GM12878 (cell line): ENCODE measurements at regions of chr1 and their contacts with region 1.

Region 1: GRCh38 chr1:159891275-159892157 is 8.4 kb downstream of the CFAP45 start:
- DNase-seq: peak; percentile 83
- ATAC-seq: peak; percentile 89
- H3K4me3 ChIP-seq: no peak overlapping the region
- H3K27ac ChIP-seq: no peak overlapping the region
- H3K4me1 ChIP-seq: peaks cover 19% of the 10 kb centered on the region
- H3K27me3 ChIP-seq: 0 out of 4 replicates have a peak, but pooled peaks cover 0 to 2% of the 10 kb centered on the region in 2 experiments
- CTCF ChIP-seq: peak; percentile 97 to 100 (median 99); a peak in 5 of 6 replicates
- EP300 ChIP-seq: no peak
- POLR2A ChIP-seq: no peak
- RAD21 ChIP-seq: peak; percentile 99

Region 2: DNA sequence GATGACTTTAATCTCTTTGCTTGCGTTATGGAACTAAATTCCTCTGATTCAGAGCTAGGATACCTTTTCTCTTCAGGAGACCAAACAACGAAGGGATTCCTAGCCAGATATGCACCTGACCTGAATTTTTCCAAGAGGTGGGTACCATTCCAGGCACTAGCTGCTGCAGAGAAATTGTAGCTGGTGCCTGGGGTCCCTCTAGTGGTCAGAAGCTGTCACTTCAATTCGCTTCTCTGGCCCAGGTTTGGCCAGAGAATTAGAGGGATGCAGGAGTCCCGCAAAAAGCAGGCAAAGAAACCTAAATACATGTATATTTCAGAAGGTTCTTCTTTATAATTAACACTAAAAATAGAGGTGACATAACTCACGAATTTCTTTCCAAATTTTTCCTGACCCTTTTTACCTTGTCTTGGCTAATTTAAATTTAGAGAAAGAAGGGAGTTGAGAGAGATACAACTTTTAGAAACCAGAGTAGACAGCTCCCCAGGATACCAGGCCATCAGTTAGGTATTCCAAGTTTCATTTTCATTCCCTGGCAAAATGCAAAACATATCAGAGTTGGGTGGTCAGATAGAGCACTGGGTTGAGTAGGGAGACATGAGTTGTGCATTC is 677.3 kb before region 1 on chr1:
- CTCF ChIA-PET with region 1: interaction called, 13 read pairs
- POLR2A ChIA-PET with region 1: no interaction called
- RAD21 ChIA-PET with region 1: interaction called, 9 read pairs
- SMC1A ChIA-PET with region 1: interaction called, 24 read pairs
- in situ Hi-C with region 1: no loop called
- intact Hi-C with region 1: loop called (anchors 2 kb)
- DNase-seq: no peak
- ATAC-seq: peak; percentile 81
- H3K4me3 ChIP-seq: no peak overlapping the region
- H3K27ac ChIP-seq: no peak overlapping the region
- H3K4me1 ChIP-seq: no peaks in the 10 kb centered on the region; the same call in 1 of the 2 replicates
- H3K27me3 ChIP-seq: peaks cover 1 to 6% of the 10 kb centered on the region in 2 experiments
- CTCF ChIP-seq: peak; percentile 86 to 88 (median 88)
- EP300 ChIP-seq: no peak
- POLR2A ChIP-seq: no peak
- RAD21 ChIP-seq: peak; percentile 78

Region 3: GRCh38 chr1:159266832-159267231 is 624.7 kb before region 1 on chr1:
- CTCF ChIA-PET with region 1: no interaction called
- POLR2A ChIA-PET with region 1: no interaction called
- RAD21 ChIA-PET with region 1: no interaction called
- SMC1A ChIA-PET with region 1: no interaction called
- in situ Hi-C with region 1: no loop called
- intact Hi-C with region 1: no loop called
- DNase-seq: no peak
- ATAC-seq: no peak
- H3K4me3 ChIP-seq: no peak overlapping the region
- H3K27ac ChIP-seq: no peak overlapping the region
- H3K4me1 ChIP-seq: no peaks in the 10 kb centered on the region
- H3K27me3 ChIP-seq: no peaks in the 10 kb centered on the region
- CTCF ChIP-seq: no peak
- EP300 ChIP-seq: no peak
- POLR2A ChIP-seq: no peak
- RAD21 ChIP-seq: no peak

Region 4: DNA sequence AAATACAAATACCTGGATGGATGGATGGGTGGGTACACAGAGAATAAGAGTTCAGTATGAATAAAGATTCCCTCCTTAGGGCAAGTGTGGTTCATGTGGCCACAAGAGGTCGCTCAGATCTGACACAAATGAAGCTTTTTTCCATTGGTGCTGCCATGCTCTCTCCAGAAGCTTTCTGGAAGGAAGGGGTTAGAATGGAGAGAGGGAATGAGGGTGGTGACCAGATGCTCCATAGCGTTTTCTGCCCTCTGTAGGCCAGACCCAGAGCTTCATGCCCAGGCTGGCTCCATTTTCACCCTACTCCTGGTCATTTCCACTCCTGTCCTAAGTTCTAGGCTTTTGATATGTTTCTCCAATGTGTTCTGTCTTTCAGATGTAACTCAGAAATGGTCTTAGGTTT is 92.6 kb before region 1 on chr1:
- CTCF ChIA-PET with region 1: interaction called, 476 read pairs
- POLR2A ChIA-PET with region 1: interaction called, 13 read pairs
- RAD21 ChIA-PET with region 1: interaction called, 153 read pairs
- SMC1A ChIA-PET with region 1: interaction called, 289 read pairs
- in situ Hi-C with region 1: loop called (anchors 5 kb)
- intact Hi-C with region 1: loop called (anchors 1 kb)
- DNase-seq: no peak
- ATAC-seq: peak; percentile 82
- H3K4me3 ChIP-seq: no peak overlapping the region
- H3K27ac ChIP-seq: no peak overlapping the region
- H3K4me1 ChIP-seq: peaks cover 9% of the 10 kb centered on the region
- H3K27me3 ChIP-seq: peaks cover 3% of the 10 kb centered on the region in 2 experiments
- CTCF ChIP-seq: peak; percentile 68 to 77 (median 71)
- EP300 ChIP-seq: no peak
- POLR2A ChIP-seq: no peak
- RAD21 ChIP-seq: peak; percentile 78

Region 5: DNA sequence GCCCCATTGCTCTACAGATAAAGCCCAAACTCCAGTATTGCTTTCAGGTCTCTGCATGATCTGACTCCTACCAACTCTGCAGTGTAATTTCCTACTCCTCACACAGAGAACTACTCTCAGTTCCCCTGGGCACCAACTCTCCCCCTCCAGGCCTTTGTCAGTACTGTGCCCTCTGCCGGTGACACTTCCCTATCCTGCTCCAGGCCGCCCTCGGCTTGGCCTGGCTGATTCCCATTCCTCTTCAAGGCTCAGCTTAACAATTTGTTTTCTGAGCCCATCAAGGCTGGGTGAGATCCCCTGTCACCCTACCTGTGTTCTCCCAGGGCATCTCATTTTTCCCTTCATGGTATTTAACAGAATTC is 62.3 kb before region 1 on chr1:
- CTCF ChIA-PET with region 1: interaction called, 42 read pairs
- POLR2A ChIA-PET with region 1: interaction called, 3 read pairs
- RAD21 ChIA-PET with region 1: interaction called, 5 read pairs
- SMC1A ChIA-PET with region 1: interaction called, 35 read pairs
- in situ Hi-C with region 1: no loop called
- intact Hi-C with region 1: loop called (anchors 2 kb)
- DNase-seq: peak; percentile 40
- ATAC-seq: peak; percentile 94
- H3K4me3 ChIP-seq: no peak overlapping the region
- H3K27ac ChIP-seq: no peak overlapping the region
- H3K4me1 ChIP-seq: peaks cover 35% of the 10 kb centered on the region
- H3K27me3 ChIP-seq: no peaks in the 10 kb centered on the region
- CTCF ChIP-seq: peak; percentile 46 to 71 (median 66)
- EP300 ChIP-seq: no peak
- POLR2A ChIP-seq: no peak
- RAD21 ChIP-seq: 0 out of 2 replicates have a peak, but pooled peaks have one; percentile 26

Region 6: GRCh38 chr1:159936273-159936904 is 44.9 kb after region 1 on chr1:
- CTCF ChIA-PET with region 1: interaction called, 22 read pairs
- POLR2A ChIA-PET with region 1: interaction called, 3 read pairs
- RAD21 ChIA-PET with region 1: interaction called, 17 read pairs
- SMC1A ChIA-PET with region 1: interaction called, 9 read pairs
- in situ Hi-C with region 1: no loop called
- intact Hi-C with region 1: no loop called
- DNase-seq: no peak
- ATAC-seq: peak; percentile 86
- H3K4me3 ChIP-seq: no peak overlapping the region
- H3K27ac ChIP-seq: no peak overlapping the region
- H3K4me1 ChIP-seq: peaks cover 23% of the 10 kb centered on the region
- H3K27me3 ChIP-seq: 0 out of 4 replicates have a peak, but pooled peaks cover 0 to 2% of the 10 kb centered on the region in 2 experiments
- CTCF ChIP-seq: peak; percentile 98; a peak in 5 of 6 replicates
- EP300 ChIP-seq: no peak
- POLR2A ChIP-seq: no peak
- RAD21 ChIP-seq: peak; percentile 87